Caco-2 (cell line): ENCODE measurements at regions of chr6 and their contacts with region 1.

Region 1: DNA sequence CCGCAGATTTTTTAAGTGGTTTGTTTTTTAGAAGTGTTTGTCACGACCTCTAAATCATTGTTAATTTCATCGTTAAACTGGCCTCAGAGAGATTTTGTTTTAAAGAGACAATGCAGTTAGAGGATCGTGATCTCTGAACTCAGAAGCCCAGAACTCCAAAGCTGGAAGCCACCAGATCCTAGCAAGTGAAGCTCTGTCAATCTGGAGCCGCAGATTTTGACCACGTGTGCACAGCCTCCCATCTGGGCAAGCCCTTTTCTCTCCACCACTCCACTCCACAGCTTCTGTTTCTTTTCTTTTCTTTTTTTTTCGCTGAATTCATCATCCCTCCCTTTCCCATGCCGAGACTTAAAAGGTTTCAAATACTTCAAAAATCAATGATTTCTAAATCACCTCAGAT is 142.2 kb upstream of the ESR1 start:
- DNase-seq: no peak
- H3K4me3 ChIP-seq: no peak overlapping the region
- H3K4me3 Mint-ChIP-seq: no peak overlapping the region
- H3K27ac Mint-ChIP-seq: no peak overlapping the region
- H3K4me1 ChIP-seq: peaks cover 29% of the 10 kb centered on the region
- H3K4me1 Mint-ChIP-seq: peaks cover 33% of the 10 kb centered on the region
- H3K27me3 ChIP-seq: no peaks in the 10 kb centered on the region
- H3K27me3 Mint-ChIP-seq: no peaks in the 10 kb centered on the region
- CTCF ChIP-seq: no peak

Region 2: DNA sequence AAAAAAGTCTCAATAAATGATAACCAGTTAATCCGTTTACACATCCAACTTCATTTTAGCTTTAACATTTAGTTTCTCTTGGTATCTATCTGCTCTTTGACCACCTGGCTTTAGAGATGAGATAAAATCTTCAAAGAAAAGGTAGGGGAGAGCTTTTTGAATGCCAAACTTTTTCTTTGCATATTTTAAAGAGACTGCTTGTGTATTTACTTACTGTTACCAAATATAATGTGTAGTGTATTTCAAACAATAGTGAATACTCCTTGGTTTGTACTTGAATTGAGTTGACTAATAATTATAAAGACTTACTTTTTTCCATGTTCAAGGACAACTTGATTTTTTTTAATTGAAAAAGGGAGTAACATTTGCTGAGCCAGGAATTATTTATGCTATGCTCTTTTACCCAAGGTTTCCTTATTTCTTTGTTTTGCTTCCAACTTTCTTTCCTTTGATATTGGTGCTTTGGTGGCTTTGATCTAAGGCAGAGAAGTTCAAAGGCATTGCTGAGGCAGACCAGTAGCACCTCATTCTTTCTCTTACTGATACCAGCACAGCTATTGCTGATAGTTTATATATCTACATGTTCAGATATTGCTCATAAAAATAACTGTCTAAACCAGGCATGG is 163.7 kb before region 1 on chr6:
- CTCF ChIA-PET with region 1: no interaction called
- POLR2A ChIA-PET with region 1: no interaction called
- intact Hi-C with region 1: loop called (anchors 5 kb)
- DNase-seq: peak; percentile 39 to 51
- H3K4me3 ChIP-seq: no peak overlapping the region
- H3K4me3 Mint-ChIP-seq: peak overlapping the region; percentile 46
- H3K27ac Mint-ChIP-seq: peak overlapping the region; percentile 56
- H3K4me1 ChIP-seq: peaks cover 16% of the 10 kb centered on the region
- H3K4me1 Mint-ChIP-seq: peaks cover 21% of the 10 kb centered on the region
- H3K27me3 ChIP-seq: no peaks in the 10 kb centered on the region
- H3K27me3 Mint-ChIP-seq: no peaks in the 10 kb centered on the region
- CTCF ChIP-seq: no peak

Region 3: GRCh38 chr6:151629791-151630190 is 35.5 kb before region 1 on chr6:
- CTCF ChIA-PET with region 1: interaction called, 6 read pairs
- POLR2A ChIA-PET with region 1: no interaction called
- intact Hi-C with region 1: loop called (anchors 5 kb)
- DNase-seq: no peak
- H3K4me3 ChIP-seq: no peak overlapping the region
- H3K4me3 Mint-ChIP-seq: no peak overlapping the region
- H3K27ac Mint-ChIP-seq: no peak overlapping the region
- H3K4me1 ChIP-seq: peaks cover 27% of the 10 kb centered on the region
- H3K4me1 Mint-ChIP-seq: peaks cover 36% of the 10 kb centered on the region
- H3K27me3 ChIP-seq: no peaks in the 10 kb centered on the region
- H3K27me3 Mint-ChIP-seq: no peaks in the 10 kb centered on the region
- CTCF ChIP-seq: no peak